ENCODE measurements at regions of chr19 and their contacts with region 1.

Region 1: GRCh38 chr19:40465557-40466150 is at the start of gene BLVRB:
- DNase-seq: peak; percentile 98 to 100 (median 100)
- ATAC-seq: peak; percentile 81
- H3K4me3 ChIP-seq: peak within 1 kb of the TSS; percentile 81
- H3K4me3 Mint-ChIP-seq: peak within 1 kb of the TSS; percentile 93
- H3K27ac ChIP-seq: peak within 1 kb of the TSS; percentile 13 to 62
- H3K27ac Mint-ChIP-seq: peak within 1 kb of the TSS; percentile 87
- H3K4me1 ChIP-seq: peaks cover 35% of the 10 kb centered on the region
- H3K4me1 Mint-ChIP-seq: peaks cover 30% of the 10 kb centered on the region
- H3K27me3 ChIP-seq: peaks cover 0 to 16% of the 10 kb centered on the region in 2 experiments
- H3K27me3 Mint-ChIP-seq: peaks cover 25% of the 10 kb centered on the region
- CTCF ChIP-seq: no peak
- total RNA-seq, gene BLVRB: 4.3 to 5.2 TPM

Region 2: DNA sequence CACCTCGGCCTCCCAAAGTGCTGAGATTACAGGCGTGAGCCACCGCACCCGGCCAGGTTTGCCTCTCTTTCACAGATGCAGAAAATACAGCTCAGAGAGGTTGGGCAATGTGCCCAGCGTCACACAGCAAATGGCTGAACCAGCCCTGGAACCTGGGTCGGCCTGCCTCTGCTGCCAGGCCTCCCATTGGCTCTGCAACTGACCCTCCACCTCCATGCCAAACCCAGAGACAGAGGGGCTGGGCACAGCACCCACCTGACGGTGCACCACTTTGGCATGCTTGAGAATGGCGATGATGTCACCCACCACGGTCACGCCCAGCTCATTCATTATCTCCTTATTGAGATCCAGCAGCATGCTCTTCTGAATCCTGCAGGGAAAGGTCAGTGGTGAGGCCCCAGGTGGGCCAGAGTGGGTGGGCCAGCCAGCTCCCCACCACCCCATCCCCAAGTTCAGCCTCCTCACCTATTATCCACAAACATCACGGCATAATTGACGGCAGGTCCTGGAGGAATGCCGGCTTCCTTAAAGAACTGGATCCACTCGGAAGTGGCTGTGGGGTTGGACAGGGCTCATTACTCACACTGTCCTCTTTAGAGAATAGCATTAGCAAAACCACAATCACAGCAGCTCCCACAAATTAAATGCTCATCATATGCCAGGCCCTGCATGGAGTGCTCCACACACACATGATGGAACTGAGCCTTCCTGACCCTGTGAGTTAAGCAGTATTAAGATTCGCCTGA is 129.6 kb before region 1 on chr19:
- CTCF ChIA-PET with region 1: no interaction called
- POLR2A ChIA-PET with region 1: no interaction called
- intact Hi-C with region 1: no loop called
- DNase-seq: no peak
- ATAC-seq: no peak
- H3K4me3 ChIP-seq: no peak overlapping the region
- H3K4me3 Mint-ChIP-seq: no peak overlapping the region
- H3K27ac ChIP-seq: no peak overlapping the region
- H3K27ac Mint-ChIP-seq: no peak overlapping the region
- H3K4me1 ChIP-seq: no peaks in the 10 kb centered on the region
- H3K4me1 Mint-ChIP-seq: no peaks in the 10 kb centered on the region
- H3K27me3 ChIP-seq: no peaks in the 10 kb centered on the region
- H3K27me3 Mint-ChIP-seq: no peaks in the 10 kb centered on the region
- CTCF ChIP-seq: no peak

Region 3: DNA sequence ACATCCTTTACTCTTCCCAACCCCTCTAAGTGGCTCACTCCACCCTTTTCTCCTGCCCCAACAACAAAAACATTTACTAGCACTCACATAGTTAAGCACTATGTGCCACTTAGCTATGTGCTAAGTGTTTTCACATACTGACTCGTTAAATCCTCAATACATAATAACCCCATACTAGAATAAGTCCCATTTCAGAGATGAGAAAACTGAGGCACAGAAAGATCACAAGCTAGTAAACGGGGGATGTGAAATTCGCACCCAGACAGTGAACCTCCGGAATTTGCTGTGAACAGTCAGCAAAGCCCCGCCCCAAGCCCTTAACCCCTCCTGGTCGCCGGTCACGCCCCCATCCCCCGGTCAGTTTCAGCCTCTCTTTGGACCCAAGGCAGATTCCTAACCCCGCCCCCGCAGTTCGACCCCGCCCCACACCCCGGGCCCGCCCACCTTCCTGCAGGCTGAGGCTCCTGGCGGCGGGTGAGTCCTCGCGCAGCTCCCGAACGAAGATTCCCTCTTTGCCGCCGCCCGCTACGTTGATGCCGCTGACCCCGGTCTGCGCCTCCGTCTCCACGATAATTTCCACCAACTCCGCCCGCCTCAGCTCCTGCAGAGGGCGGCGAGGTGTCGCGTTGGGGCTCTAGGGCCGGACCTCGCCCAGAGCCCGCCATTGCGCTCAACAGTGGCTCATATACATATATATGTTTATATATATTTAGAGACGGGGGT is 62.2 kb before region 1 on chr19:
- CTCF ChIA-PET with region 1: interaction called, 5 read pairs
- POLR2A ChIA-PET with region 1: interaction called, 8 read pairs
- intact Hi-C with region 1: loop called (anchors 2 to 10 kb)
- DNase-seq: peak; percentile 46 to 89 (median 70)
- ATAC-seq: peak; percentile 45
- H3K4me3 ChIP-seq: peak overlapping the region; percentile 88
- H3K4me3 Mint-ChIP-seq: peak overlapping the region; percentile 94
- H3K27ac ChIP-seq: peak overlapping the region; percentile 22 to 56
- H3K27ac Mint-ChIP-seq: peak overlapping the region; percentile 64
- H3K4me1 ChIP-seq: peaks cover 34% of the 10 kb centered on the region
- H3K4me1 Mint-ChIP-seq: peaks cover 35% of the 10 kb centered on the region
- H3K27me3 ChIP-seq: no peaks in the 10 kb centered on the region
- H3K27me3 Mint-ChIP-seq: no peaks in the 10 kb centered on the region
- CTCF ChIP-seq: no peak

Region 4: GRCh38 chr19:40497214-40497613 is 31.6 kb after region 1 on chr19:
- CTCF ChIA-PET with region 1: no interaction called
- POLR2A ChIA-PET with region 1: no interaction called
- intact Hi-C with region 1: no loop called
- DNase-seq: no peak
- ATAC-seq: no peak
- H3K4me3 ChIP-seq: no peak overlapping the region
- H3K4me3 Mint-ChIP-seq: no peak overlapping the region
- H3K27ac ChIP-seq: no peak overlapping the region
- H3K27ac Mint-ChIP-seq: no peak overlapping the region
- H3K4me1 ChIP-seq: no peaks in the 10 kb centered on the region
- H3K4me1 Mint-ChIP-seq: no peaks in the 10 kb centered on the region
- H3K27me3 ChIP-seq: peaks cover 0 to 2% of the 10 kb centered on the region in 2 experiments
- H3K27me3 Mint-ChIP-seq: peaks cover 22% of the 10 kb centered on the region
- CTCF ChIP-seq: no peak

Region 5: DNA sequence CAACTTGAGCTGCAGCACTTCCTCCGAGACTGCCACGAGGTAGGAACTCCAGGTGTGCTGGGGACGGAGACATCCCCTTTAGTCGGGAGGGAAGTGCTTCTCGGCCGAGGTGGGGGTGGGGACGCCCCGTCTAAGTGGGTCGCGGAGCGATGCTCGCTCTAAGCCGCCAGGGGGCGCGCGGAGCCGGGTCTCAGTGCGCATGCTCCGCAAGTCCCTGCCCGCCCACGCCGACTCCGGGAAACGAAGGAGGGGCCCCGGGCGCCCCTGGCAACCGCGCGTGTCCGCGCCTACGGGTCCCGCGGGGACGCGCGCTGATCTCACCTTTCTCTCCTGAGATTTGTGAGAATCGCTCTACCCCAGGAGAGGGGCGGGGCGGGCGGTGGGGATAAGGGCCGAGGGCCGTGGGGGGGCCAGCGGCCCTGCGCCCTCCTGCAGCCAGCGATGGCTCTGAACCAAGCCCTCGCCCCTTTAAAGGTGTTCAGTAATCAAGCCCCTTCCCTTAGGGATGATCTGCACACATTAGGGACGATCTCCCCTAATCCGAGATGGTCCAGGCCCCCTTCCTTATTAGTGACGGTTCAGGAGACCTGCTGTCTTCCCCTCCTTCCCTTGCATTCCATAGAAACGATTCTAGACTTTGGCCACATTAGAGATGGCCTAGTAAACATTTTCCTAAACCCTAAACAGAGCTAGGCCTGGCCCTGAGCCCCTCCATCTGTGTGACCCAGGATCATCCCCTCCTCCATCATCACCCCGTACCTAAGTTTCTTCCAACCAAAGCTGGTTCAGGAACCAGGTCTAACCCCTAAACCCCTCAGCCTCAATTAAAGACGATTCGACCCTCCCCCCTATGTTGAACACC is 63.7 kb after region 1 on chr19:
- CTCF ChIA-PET with region 1: no interaction called
- POLR2A ChIA-PET with region 1: no interaction called
- intact Hi-C with region 1: loop called in 1 of 2 experiments (anchors 2 kb)
- DNase-seq: peak; percentile 82 to 95 (median 89)
- ATAC-seq: peak; percentile 91
- H3K4me3 ChIP-seq: peak overlapping the region; percentile 54
- H3K4me3 Mint-ChIP-seq: peak overlapping the region; percentile 74
- H3K27ac ChIP-seq: no peak overlapping the region
- H3K27ac Mint-ChIP-seq: no peak overlapping the region
- H3K4me1 ChIP-seq: peaks cover 16% of the 10 kb centered on the region
- H3K4me1 Mint-ChIP-seq: peaks cover 17% of the 10 kb centered on the region
- H3K27me3 ChIP-seq: peaks cover 23% of the 10 kb centered on the region in 2 experiments
- H3K27me3 Mint-ChIP-seq: peaks cover 35% of the 10 kb centered on the region
- CTCF ChIP-seq: peak; percentile 95

Region 6: DNA sequence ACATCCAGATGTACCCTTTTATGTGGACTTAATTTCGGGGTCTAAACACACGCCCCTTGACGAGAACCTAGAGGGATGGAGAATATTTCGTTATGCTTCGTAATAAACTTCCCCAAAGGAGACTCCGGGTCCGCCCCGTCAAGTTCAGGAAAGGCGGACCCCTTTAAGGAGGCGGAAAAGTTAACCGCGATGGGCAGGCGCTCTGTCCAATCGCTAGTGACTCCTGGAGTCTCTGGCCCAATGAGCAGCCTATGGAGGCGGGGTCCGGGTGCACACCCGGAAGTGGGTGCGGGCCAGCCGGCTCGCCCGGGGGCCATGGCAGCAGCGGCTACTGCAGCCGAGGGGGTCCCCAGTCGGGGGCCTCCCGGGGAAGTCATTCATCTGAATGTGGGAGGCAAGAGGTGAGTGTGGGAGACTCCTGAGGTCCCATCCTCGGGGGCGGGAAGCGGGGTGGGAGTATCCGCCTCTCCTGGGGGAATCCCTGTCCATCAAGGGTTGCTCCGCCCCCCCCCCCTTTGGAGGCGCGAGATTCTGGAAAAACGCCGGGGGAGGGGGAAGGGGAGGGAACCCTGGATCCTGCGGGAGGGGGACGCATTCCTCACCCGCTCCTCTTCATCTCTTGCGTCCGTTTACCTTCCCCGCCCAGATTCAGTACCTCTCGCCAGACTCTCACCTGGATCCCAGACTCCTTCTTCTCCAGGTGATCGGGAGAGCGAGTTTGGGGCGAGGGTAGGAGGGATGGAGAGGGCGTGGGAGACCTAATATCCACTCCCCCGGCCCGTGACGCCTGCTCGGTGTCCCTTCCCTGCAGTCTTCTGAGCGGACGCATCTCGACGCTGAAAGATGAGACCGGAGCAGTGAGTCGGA is 111.2 kb after region 1 on chr19 and contains the start of gene SHKBP1:
- CTCF ChIA-PET with region 1: no interaction called
- POLR2A ChIA-PET with region 1: no interaction called
- intact Hi-C with region 1: loop called in 1 of 2 experiments (anchors 5 kb)
- DNase-seq: peak; percentile 84 to 96 (median 90)
- ATAC-seq: peak; percentile 99
- H3K4me3 ChIP-seq: peak within 1 kb of the TSS; percentile 97
- H3K4me3 Mint-ChIP-seq: peak within 1 kb of the TSS; percentile 94
- H3K27ac ChIP-seq: peak within 1 kb of the TSS; percentile 60 to 64
- H3K27ac Mint-ChIP-seq: peak within 1 kb of the TSS; percentile 83
- H3K4me1 ChIP-seq: peaks cover 37% of the 10 kb centered on the region
- H3K4me1 Mint-ChIP-seq: peaks cover 33% of the 10 kb centered on the region
- H3K27me3 ChIP-seq: no peaks in the 10 kb centered on the region
- H3K27me3 Mint-ChIP-seq: no peaks in the 10 kb centered on the region
- CTCF ChIP-seq: no peak
- total RNA-seq, gene SHKBP1: 82.5 to 92.9 TPM

Region 7: DNA sequence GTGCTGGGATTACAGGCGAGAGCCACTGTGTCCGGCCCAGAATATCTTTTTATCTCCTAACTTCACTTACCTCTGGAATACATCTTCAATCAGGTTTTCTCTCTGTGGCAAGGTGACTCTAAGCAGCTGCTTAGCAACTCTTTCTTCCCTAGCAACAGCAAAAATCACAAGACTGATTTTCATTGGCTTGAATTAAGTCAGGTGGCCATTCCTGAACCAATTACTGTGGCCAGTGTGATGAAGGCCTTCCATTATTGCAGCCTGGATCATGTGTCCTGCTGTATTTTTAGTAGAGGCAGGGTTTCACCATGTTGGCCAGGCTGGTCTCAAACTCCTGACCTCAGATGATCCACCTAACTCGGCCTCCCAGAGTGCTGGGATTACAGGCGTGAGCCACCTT is 126.5 kb after region 1 on chr19:
- CTCF ChIA-PET with region 1: no interaction called
- POLR2A ChIA-PET with region 1: no interaction called
- intact Hi-C with region 1: no loop called
- DNase-seq: peak in 3 of 14 experiments; percentile 61 to 67 (median 64)
- ATAC-seq: peak; percentile 80
- H3K4me3 ChIP-seq: no peak overlapping the region
- H3K4me3 Mint-ChIP-seq: no peak overlapping the region
- H3K27ac ChIP-seq: no peak overlapping the region
- H3K27ac Mint-ChIP-seq: no peak overlapping the region
- H3K4me1 ChIP-seq: peaks cover 17% of the 10 kb centered on the region
- H3K4me1 Mint-ChIP-seq: peaks cover 13% of the 10 kb centered on the region
- H3K27me3 ChIP-seq: peaks cover 5 to 9% of the 10 kb centered on the region in 2 experiments
- H3K27me3 Mint-ChIP-seq: peaks cover 12% of the 10 kb centered on the region
- CTCF ChIP-seq: no peak

Measured in CD4-positive, alpha-beta T cell (primary cell).